Activated CD8-positive, alpha-beta T cell treated with anti-CD3 and anti-CD28 coated beads, Interleukin-2, amount 10 ng/mL, durations not matched to agents 7 days and 5 days (primary cell): ENCODE measurements at regions of chr12 and their contacts with region 1.

Region 1: GRCh38 chr12:121334513-121335343 is 17.5 kb downstream of the ANAPC5 start:
- DNase-seq: peak; percentile 42
- ATAC-seq: peak; percentile 76
- H3K4me3 Mint-ChIP-seq: no peak overlapping the region
- H3K27ac Mint-ChIP-seq: no peak overlapping the region
- H3K4me1 Mint-ChIP-seq: peaks cover 5% of the 10 kb centered on the region
- H3K27me3 Mint-ChIP-seq: no peaks in the 10 kb centered on the region

Region 2: GRCh38 chr12:121279507-121279915 is 55.2 kb before region 1 on chr12:
- CTCF ChIA-PET with region 1: no interaction called
- POLR2A ChIA-PET with region 1: no interaction called
- DNase-seq: no peak
- ATAC-seq: no peak
- H3K4me3 Mint-ChIP-seq: no peak overlapping the region
- H3K27ac Mint-ChIP-seq: peak overlapping the region; percentile 34
- H3K4me1 Mint-ChIP-seq: peaks cover 4% of the 10 kb centered on the region
- H3K27me3 Mint-ChIP-seq: no peaks in the 10 kb centered on the region

Region 3: GRCh38 chr12:121345151-121345815 is 10.6 kb after region 1 on chr12:
- CTCF ChIA-PET with region 1: interaction called, 31 read pairs
- POLR2A ChIA-PET with region 1: no interaction called
- DNase-seq: no peak
- ATAC-seq: no peak
- H3K4me3 Mint-ChIP-seq: no peak overlapping the region
- H3K27ac Mint-ChIP-seq: no peak overlapping the region
- H3K4me1 Mint-ChIP-seq: peaks cover 6% of the 10 kb centered on the region
- H3K27me3 Mint-ChIP-seq: no peaks in the 10 kb centered on the region

Region 4: GRCh38 chr12:121351820-121352681 is 17.3 kb after region 1 on chr12 and contains the start of gene ANAPC5:
- CTCF ChIA-PET with region 1: interaction called, 31 read pairs
- POLR2A ChIA-PET with region 1: interaction called, 4 read pairs
- DNase-seq: peak; percentile 95
- ATAC-seq: peak; percentile 98
- H3K4me3 Mint-ChIP-seq: peak within 1 kb of the TSS; percentile 87
- H3K27ac Mint-ChIP-seq: peak within 1 kb of the TSS; percentile 97
- H3K4me1 Mint-ChIP-seq: peaks cover 22% of the 10 kb centered on the region
- H3K27me3 Mint-ChIP-seq: peaks cover under 1% of the 10 kb centered on the region
- total RNA-seq, gene ANAPC5: 135 to 147 TPM

Region 5: GRCh38 chr12:121443193-121443870 is 108.6 kb after region 1 on chr12:
- CTCF ChIA-PET with region 1: interaction called, 61 read pairs
- POLR2A ChIA-PET with region 1: no interaction called
- DNase-seq: peak; percentile 68
- ATAC-seq: peak; percentile 84
- H3K4me3 Mint-ChIP-seq: no peak overlapping the region
- H3K27ac Mint-ChIP-seq: peak overlapping the region; percentile 43
- H3K4me1 Mint-ChIP-seq: peaks cover 1% of the 10 kb centered on the region
- H3K27me3 Mint-ChIP-seq: no peaks in the 10 kb centered on the region